Ovary (tissue), 10 donors: ENCODE measurements at regions of chr2 and their contacts with region 1.

Region 1: GRCh38 chr2:120669121-120669952 is 66.3 kb upstream of the GLI2 start:
- DNase-seq: no peak
- H3K4me3 ChIP-seq: no peak overlapping the region
- H3K27ac ChIP-seq: no peak overlapping the region
- H3K4me1 ChIP-seq: peaks cover 3% of the 10 kb centered on the region
- H3K27me3 ChIP-seq: no peaks in the 10 kb centered on the region
- CTCF ChIP-seq: no peak
- EP300 ChIP-seq: no peak
- POLR2A ChIP-seq: no peak

Region 2: DNA sequence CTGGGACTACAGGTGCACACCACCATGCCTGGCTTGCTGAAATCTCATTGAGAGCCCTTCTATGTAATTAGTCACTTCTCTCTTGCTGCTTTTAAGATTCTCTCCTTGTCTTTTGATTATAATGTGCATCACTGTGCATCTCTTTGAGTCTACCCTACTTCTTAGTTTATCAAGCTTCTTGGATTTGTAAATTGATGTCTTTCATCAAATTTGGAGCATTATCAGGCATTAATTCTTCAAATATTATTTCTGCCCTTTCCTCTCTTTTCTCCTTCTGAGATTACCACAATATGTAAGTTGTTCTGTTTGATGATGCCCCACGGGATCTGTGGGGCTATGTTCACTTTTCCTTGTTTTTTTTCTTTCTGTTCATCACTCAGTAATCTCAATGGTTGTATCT is 1736.4 kb before region 1 on chr2:
- intact Hi-C with region 1: loop called in 1 of 4 experiments (anchors 5 kb)
- DNase-seq: no peak
- H3K4me3 ChIP-seq: no peak overlapping the region
- H3K27ac ChIP-seq: no peak overlapping the region
- H3K4me1 ChIP-seq: no peaks in the 10 kb centered on the region
- H3K27me3 ChIP-seq: no peaks in the 10 kb centered on the region
- CTCF ChIP-seq: no peak
- EP300 ChIP-seq: no peak
- POLR2A ChIP-seq: no peak

Region 3: DNA sequence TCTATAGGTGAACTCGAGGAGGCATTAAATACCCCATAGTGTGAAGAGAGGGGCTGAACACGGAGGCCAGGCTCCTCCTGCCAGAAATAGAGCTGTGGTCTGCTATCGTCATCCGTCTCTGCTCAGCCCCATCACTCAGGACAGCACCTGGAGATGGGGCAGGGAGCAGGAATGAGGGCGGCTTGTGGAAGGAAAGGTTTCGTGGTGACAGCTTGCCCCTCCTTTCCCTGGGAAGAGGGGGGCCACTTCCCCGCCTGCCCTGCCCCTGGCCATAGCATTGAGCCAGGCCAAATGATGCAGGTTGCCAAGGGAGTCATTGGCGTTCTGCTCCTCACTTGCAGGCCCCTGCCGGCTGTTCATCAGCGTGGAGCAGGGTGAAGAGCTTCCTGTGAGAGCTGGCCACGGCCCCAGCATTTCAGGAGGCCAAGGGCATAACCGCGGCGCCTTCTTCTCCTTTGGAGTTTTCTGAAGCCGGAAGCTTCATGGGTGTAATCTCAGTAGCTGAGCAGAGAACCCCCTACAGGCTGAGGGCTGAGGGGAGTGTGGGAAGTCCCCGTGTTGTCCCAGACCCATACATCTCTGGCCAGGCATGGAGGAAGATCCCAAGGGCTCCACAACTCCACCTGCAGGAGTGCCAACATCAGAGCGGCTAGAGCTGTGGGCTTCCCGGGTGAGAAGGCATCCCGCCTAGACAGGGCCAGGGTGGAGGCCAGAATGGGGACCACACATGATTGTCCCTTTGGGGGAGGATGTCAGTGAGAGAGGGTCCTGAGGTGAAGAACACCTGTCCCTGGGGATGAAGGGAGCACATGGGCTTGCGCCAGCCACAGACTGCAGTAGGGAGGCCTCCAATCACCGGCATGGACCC is 46.2 kb before region 1 on chr2:
- intact Hi-C with region 1: loop called in 1 of 4 experiments (anchors 2 kb)
- DNase-seq: no peak
- H3K4me3 ChIP-seq: no peak overlapping the region
- H3K27ac ChIP-seq: no peak overlapping the region
- H3K4me1 ChIP-seq: no peaks in the 10 kb centered on the region
- H3K27me3 ChIP-seq: no peaks in the 10 kb centered on the region
- CTCF ChIP-seq: no peak
- EP300 ChIP-seq: no peak
- POLR2A ChIP-seq: no peak

Region 4: GRCh38 chr2:120656273-120656950 is 12.9 kb before region 1 on chr2:
- intact Hi-C with region 1: no loop called
- DNase-seq: no peak
- H3K4me3 ChIP-seq: no peak overlapping the region
- H3K27ac ChIP-seq: no peak overlapping the region
- H3K4me1 ChIP-seq: peaks cover 29% of the 10 kb centered on the region
- H3K27me3 ChIP-seq: no peaks in the 10 kb centered on the region
- CTCF ChIP-seq: no peak
- EP300 ChIP-seq: no peak
- POLR2A ChIP-seq: no peak